HEK293 (cell line): ENCODE measurements at regions of chr7 and their contacts with region 1.

Region 1: GRCh38 chr7:105429746-105430612 is 41.3 kb upstream of the SRPK2 start:
- H3K4me3 ChIP-seq: no peak overlapping the region
- H3K27ac ChIP-seq: no peak overlapping the region
- H3K4me1 ChIP-seq: no peaks in the 10 kb centered on the region
- CTCF ChIP-seq: peak; percentile 38; the same call in 1 of the 2 replicates

Region 2: DNA sequence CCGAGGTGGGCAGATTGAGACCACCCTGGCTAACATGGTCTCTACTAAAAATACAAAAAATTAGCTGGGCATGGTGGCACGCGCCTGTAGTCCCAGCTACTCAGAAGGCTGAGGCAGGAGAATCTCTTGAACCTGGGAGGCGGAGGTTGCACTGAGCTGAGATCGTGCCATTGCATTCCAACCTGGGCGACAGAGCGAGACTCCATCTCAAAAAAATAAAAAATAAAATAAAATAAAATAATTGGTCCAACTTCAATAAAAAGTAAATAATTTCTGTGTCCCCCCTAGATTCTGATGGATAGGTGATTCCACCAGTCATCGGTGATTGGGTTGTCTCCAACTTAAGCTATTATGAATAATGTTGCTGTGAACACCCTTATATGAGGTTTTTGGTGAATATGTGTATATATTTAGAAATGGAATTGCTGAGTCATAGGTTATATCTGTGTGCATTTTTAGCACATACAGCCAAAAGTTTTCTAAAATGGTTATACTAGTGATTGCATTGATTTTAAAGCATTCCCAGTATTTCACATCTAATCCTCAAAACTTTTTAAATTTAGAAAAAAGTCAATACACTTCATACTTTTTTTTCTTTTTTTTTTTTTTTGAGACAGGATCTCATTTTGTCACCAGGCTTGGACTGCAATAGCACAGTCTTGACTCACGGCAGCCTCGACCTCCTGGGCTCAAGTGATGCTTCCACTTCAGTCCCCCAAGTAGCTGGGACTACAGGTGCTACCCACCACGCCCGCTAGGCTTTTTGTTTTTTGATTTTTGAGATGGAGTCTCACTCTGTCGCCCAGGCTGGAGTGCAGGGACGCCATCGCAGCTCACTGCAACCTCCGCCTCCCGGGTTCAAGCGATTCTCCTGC is 27.5 kb before region 1 on chr7:
- CTCF ChIA-PET with region 1: interaction called, 14 read pairs
- POLR2A ChIA-PET with region 1: no interaction called
- H3K4me3 ChIP-seq: no peak overlapping the region
- H3K27ac ChIP-seq: no peak overlapping the region
- H3K4me1 ChIP-seq: no peaks in the 10 kb centered on the region
- CTCF ChIP-seq: no peak

Region 3: GRCh38 chr7:105454095-105454747 is 24.2 kb after region 1 on chr7:
- CTCF ChIA-PET with region 1: no interaction called
- POLR2A ChIA-PET with region 1: no interaction called
- H3K4me3 ChIP-seq: no peak overlapping the region
- H3K27ac ChIP-seq: no peak overlapping the region
- H3K4me1 ChIP-seq: no peaks in the 10 kb centered on the region
- CTCF ChIP-seq: no peak